Esophagus squamous epithelium (tissue), 5 donors: ENCODE measurements at regions of chr10 and their contacts with region 1.

Region 1: DNA sequence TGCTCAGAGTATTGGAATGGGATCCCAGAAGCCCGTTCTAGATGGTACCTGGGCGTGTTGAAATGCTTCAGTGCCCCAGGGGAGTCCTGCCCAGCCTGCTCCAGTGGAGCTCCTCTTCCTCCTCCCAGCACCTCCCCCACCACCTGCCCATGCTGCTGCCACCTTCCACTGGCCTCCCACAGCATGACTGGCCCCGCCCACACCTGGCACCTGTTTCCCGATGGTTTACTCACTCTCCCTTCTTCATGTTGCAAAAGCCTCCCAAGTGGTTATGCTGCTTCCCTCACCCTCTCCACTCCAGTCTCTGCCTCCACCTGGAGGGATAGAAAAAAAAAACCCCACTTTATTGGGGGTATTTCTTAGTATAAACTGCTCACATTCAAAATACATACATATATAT is 32.2 kb upstream of the PCBD1 start:
- DNase-seq: no peak
- H3K4me3 ChIP-seq: no peak overlapping the region
- H3K27ac ChIP-seq: no peak overlapping the region
- H3K4me1 ChIP-seq: peaks cover 0 to 27% (median 0%) of the 10 kb centered on the region in 3 donors
- H3K27me3 ChIP-seq: peaks cover 0 to 65% (median 0%) of the 10 kb centered on the region in 4 donors
- CTCF ChIP-seq: no peak
- POLR2A ChIP-seq: no peak

Region 2: DNA sequence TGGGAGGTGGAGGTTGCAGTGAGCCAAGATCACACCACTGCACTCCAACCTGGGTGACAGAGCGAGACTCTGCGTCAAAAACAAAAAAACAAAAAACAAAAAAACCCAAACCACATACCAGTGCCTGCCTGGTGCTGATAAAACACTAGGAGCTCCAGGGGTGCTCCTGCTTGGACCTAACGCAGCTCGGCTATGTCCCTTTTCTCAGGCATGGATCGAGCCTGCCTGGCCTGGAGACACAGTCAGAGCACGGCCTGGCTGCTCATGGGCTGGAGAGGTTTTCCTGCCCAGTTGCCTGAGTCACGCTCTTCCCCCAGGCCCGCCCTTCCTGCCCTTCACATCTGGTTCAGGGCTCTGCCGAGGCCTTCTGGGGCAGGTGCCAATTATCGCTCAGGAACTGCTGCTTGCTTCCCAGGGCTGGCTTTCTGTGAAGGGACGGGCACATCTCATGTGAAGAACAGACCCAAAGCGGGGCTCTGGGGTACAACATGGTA is 624.1 kb before region 1 on chr10:
- intact Hi-C with region 1: no loop called
- DNase-seq: no peak
- H3K4me3 ChIP-seq: no peak overlapping the region
- H3K27ac ChIP-seq: peak overlapping the region; percentile 52 to 75 (median 62)
- H3K4me1 ChIP-seq: peaks cover 4 to 18% (median 11%) of the 10 kb centered on the region in 3 donors
- H3K27me3 ChIP-seq: peaks cover 0 to 8% (median 0%) of the 10 kb centered on the region in 4 donors
- CTCF ChIP-seq: no peak
- POLR2A ChIP-seq: no peak

Region 3: DNA sequence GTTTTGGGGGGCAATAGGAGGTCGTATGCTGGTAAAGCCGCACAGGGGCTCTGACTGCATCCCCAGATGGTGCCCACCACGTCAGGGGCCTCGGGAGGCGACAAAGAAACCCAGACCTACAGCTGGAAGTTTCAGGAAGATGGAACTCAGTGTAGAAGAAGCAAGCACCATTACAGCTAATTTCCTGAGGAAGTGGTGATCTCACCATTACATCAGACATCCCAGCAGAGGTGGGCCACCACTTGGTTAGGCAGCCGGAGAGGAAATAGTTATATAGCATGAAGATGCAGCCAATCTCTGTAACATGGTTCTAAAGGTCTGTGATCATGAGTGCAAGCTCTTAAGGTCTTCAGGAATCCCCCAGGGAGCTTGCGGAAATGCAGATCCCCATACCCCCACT is 95.1 kb after region 1 on chr10:
- intact Hi-C with region 1: no loop called
- DNase-seq: no peak
- H3K4me3 ChIP-seq: no peak overlapping the region
- H3K27ac ChIP-seq: no peak overlapping the region
- H3K4me1 ChIP-seq: no peaks in the 10 kb centered on the region
- H3K27me3 ChIP-seq: no peaks in the 10 kb centered on the region
- CTCF ChIP-seq: no peak
- POLR2A ChIP-seq: no peak

Region 4: DNA sequence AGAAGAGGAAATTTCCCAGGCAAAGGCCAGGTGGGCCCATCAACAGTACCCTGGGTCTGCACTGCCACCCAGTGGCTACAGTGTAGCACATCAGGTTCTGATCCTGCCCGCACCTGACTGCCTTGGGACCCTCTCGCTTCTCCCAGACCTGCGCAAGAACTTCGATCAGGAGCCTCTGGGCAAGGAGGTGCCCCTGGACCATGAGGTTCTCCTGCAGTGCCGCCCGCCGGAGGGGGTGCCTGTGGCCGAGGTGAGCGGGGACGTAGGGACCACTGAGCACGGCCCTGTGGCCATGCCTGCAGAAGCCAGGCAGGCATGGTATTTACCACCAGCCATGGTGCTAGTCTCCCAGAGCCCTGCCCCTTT is 364.6 kb after region 1 on chr10:
- intact Hi-C with region 1: loop called (anchors 5 kb)
- DNase-seq: no peak
- H3K4me3 ChIP-seq: no peak overlapping the region
- H3K27ac ChIP-seq: no peak overlapping the region
- H3K4me1 ChIP-seq: no peaks in the 10 kb centered on the region
- H3K27me3 ChIP-seq: no peaks in the 10 kb centered on the region
- CTCF ChIP-seq: peak; percentile 30 to 77 (median 64)
- POLR2A ChIP-seq: no peak